Activated naive CD4-positive, alpha-beta T cell treated with anti-CD3 and anti-CD28 coated beads for 36 hours (primary cell): ENCODE measurements at regions of chr1 and their contacts with region 1.

Region 1: GRCh38 chr1:231866392-231867331 is 240.1 kb downstream of the DISC1 start:
- DNase-seq: peak; percentile 78
- H3K4me3 Mint-ChIP-seq: no peak overlapping the region
- H3K27ac Mint-ChIP-seq: no peak overlapping the region
- H3K4me1 Mint-ChIP-seq: peaks cover 22% of the 10 kb centered on the region
- H3K27me3 Mint-ChIP-seq: no peaks in the 10 kb centered on the region

Region 2: DNA sequence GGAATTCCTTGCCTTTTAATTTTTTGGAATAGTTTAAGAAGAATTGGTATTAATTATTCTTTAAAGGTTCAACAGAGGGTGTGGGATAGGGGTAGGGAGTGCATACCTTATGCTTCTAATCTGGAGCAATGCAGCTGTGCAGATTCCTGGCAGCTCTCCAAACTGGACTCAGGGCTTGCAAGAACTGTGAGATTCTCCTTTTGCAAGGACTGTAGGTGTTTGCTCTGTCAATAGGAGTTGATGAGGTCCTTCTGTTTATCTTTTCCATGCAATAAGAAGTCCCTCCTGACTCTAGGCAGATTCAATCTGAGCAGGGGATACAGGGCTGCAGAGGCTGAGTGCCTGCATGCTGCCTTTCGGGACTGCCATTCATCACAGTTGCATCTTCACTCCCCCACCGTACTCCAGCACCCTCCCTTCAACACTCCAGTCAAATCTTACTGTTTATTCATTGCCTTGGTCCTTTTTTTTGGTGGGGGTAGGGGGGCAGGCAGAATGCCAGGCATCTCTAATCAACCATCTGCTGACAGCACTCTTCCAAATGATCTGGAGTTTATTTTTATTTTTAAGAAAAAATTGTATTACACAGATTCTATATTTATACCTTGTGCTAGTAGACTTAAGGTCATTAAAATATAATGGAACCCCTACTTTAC is 117.8 kb before region 1 on chr1:
- CTCF ChIA-PET with region 1: no interaction called
- intact Hi-C with region 1: no loop called
- DNase-seq: no peak
- H3K4me3 Mint-ChIP-seq: no peak overlapping the region
- H3K27ac Mint-ChIP-seq: no peak overlapping the region
- H3K4me1 Mint-ChIP-seq: no peaks in the 10 kb centered on the region
- H3K27me3 Mint-ChIP-seq: no peaks in the 10 kb centered on the region

Region 3: GRCh38 chr1:231931846-231932454 is 65.3 kb after region 1 on chr1:
- CTCF ChIA-PET with region 1: interaction called, 49 read pairs
- intact Hi-C with region 1: loop called (anchors 2 kb)
- DNase-seq: peak; percentile 70
- H3K4me3 Mint-ChIP-seq: no peak overlapping the region
- H3K27ac Mint-ChIP-seq: no peak overlapping the region
- H3K4me1 Mint-ChIP-seq: peaks cover 20% of the 10 kb centered on the region
- H3K27me3 Mint-ChIP-seq: no peaks in the 10 kb centered on the region

Region 4: GRCh38 chr1:231971397-231972104 is 104.9 kb after region 1 on chr1:
- CTCF ChIA-PET with region 1: no interaction called
- intact Hi-C with region 1: loop called (anchors 5 kb)
- DNase-seq: no peak
- H3K4me3 Mint-ChIP-seq: no peak overlapping the region
- H3K27ac Mint-ChIP-seq: no peak overlapping the region
- H3K4me1 Mint-ChIP-seq: peaks cover 2% of the 10 kb centered on the region
- H3K27me3 Mint-ChIP-seq: no peaks in the 10 kb centered on the region

Region 5: DNA sequence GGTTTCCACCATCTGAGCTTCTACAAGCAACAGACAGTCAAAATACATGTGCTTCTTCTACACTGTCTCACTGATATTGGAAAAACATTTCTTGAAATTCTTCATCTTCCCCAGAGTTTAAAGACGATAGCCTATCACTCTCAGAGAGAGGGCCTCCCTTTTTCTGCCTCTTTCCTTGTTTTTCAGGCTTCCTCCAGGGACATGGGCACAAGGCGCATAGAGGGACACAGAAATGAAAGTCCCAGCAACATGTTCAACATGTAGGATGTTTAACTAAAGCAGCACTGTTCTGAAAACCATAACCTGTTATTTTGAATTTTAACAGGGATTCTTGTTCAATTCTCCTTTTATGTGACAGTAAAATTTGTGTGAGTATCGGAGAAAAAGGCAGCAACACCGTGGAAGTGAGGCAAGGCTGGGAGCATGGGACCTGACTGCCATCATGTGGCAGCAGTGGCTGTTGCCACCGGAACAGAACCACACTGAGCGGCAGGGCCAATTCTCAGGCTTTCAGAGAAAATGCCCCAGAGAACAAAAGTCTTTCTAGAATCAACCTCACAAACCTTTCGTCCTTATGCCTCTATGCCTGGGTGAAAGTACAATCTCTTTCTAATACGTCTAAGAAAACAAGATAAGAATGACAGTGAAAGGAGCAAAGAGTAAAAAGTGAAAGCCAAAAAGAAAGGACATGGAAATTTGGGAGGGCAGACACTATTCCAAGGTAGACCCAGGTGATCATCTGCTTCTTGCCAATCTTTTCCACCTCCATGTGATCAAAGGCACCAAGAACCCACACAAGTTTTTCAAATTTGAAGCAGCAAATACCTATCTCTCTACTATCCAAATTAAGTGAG is 1374.4 kb after region 1 on chr1:
- CTCF ChIA-PET with region 1: no interaction called
- intact Hi-C with region 1: loop called (anchors 10 kb)
- DNase-seq: peak; percentile 28
- H3K4me3 Mint-ChIP-seq: no peak overlapping the region
- H3K27ac Mint-ChIP-seq: no peak overlapping the region
- H3K4me1 Mint-ChIP-seq: no peaks in the 10 kb centered on the region
- H3K27me3 Mint-ChIP-seq: no peaks in the 10 kb centered on the region